Activated B cell treated with CpG ODN at 0.5 μM for 24 hours (primary cell): ENCODE measurements at regions of chr1 and their contacts with region 1.

Region 1: DNA sequence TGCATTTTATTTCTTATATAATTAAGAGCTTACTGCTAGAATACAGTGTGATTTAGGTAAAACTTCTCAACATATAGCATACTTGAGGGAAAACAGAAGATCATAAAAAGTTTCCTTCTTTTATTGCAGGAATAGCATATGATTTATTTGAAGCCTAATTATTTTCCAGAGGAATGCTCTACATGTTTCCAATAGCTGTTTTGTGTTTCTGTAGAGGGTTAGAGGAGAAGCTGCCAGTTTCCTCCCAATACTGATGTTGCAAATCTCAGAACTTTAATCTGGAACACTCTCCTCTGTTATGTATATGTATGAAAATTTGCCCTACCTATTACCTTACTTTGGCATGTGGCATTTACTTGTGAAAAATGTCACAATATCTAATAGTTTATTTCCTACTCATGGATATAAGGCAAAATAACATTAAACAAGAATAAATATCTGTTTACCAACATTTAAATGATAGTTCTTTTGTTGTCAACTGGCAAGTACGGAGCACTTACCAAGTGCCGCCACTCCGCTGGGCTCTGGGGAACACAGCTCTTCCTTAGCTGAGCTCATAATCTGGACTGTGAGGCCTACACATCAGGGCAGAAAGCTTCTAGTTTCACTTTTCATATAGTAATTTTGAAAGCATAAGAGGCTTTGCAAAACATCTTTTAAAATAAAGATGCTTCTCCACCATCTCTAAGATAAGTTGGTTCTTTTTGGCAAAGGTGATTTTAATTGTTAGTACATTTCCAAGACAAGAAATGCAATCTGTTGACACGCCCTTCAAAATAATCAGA is 239.8 kb upstream of the C1orf105 start:
- DNase-seq: no peak
- ATAC-seq: peak; percentile 76
- H3K4me3 Mint-ChIP-seq: peak overlapping the region; percentile 79
- H3K27ac Mint-ChIP-seq: peak overlapping the region; percentile 97
- H3K4me1 Mint-ChIP-seq: peaks cover 53% of the 10 kb centered on the region
- H3K27me3 Mint-ChIP-seq: no peaks in the 10 kb centered on the region
- CTCF ChIP-seq: no peak

Region 2: GRCh38 chr1:172089768-172090510 is 90.8 kb before region 1 on chr1:
- CTCF ChIA-PET with region 1: interaction called, 6 read pairs
- POLR2A ChIA-PET with region 1: no interaction called
- intact Hi-C with region 1: loop called (anchors 2 kb)
- DNase-seq: peak; percentile 41
- ATAC-seq: peak; percentile 90
- H3K4me3 Mint-ChIP-seq: peak overlapping the region; percentile 36
- H3K27ac Mint-ChIP-seq: peak overlapping the region; percentile 8
- H3K4me1 Mint-ChIP-seq: peaks cover 8% of the 10 kb centered on the region
- H3K27me3 Mint-ChIP-seq: no peaks in the 10 kb centered on the region
- CTCF ChIP-seq: no peak

Region 3: GRCh38 chr1:172229942-172230341 is 49.2 kb after region 1 on chr1:
- CTCF ChIA-PET with region 1: no interaction called
- POLR2A ChIA-PET with region 1: interaction called, 5 read pairs
- intact Hi-C with region 1: loop called (anchors 5 kb)
- DNase-seq: no peak
- ATAC-seq: no peak
- H3K4me3 Mint-ChIP-seq: no peak overlapping the region
- H3K27ac Mint-ChIP-seq: no peak overlapping the region
- H3K4me1 Mint-ChIP-seq: peaks cover 5% of the 10 kb centered on the region
- H3K27me3 Mint-ChIP-seq: no peaks in the 10 kb centered on the region
- CTCF ChIP-seq: no peak

Region 4: DNA sequence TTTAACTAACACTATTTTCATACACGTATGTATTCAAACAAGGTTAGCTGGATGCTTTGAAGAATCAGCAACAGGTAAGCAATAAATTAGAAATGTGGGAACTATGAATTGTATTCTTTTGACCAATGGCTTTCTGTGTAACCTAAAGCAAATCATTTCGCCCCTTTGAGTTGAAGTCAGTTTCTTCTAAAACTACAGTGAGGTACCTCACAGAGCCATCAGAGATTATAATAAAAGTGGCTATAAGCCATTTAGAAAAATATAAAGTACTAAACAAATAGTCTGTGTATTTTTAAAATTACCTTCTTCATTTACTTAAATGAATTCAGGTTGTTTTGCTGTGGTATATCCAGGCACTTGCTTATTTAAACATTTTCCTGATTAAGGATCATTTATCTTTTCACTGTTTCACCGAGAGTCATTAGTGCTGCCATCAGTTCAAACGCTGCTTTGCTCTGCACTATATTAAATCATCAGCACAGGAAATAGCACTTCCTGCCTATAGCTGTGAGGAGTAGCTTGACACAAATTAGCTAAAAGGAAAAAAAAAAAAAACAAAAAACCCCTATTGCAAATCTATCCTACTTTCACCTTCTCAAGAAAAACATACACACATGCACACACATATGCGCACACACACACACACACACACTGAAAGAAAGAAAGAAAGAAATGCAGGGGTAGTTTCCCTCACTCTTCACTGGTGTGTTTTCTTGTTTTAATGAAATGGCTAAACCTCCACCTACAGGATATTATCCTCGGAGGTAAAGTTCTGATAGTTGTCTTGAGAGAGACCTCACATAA is 199.9 kb after region 1 on chr1:
- CTCF ChIA-PET with region 1: interaction called, 5 read pairs
- POLR2A ChIA-PET with region 1: interaction called, 12 read pairs
- intact Hi-C with region 1: loop called (anchors 1 kb)
- DNase-seq: no peak
- ATAC-seq: peak; percentile 95
- H3K4me3 Mint-ChIP-seq: peak overlapping the region; percentile 67
- H3K27ac Mint-ChIP-seq: peak overlapping the region; percentile 94
- H3K4me1 Mint-ChIP-seq: peaks cover 58% of the 10 kb centered on the region
- H3K27me3 Mint-ChIP-seq: no peaks in the 10 kb centered on the region
- CTCF ChIP-seq: no peak

Region 5: DNA sequence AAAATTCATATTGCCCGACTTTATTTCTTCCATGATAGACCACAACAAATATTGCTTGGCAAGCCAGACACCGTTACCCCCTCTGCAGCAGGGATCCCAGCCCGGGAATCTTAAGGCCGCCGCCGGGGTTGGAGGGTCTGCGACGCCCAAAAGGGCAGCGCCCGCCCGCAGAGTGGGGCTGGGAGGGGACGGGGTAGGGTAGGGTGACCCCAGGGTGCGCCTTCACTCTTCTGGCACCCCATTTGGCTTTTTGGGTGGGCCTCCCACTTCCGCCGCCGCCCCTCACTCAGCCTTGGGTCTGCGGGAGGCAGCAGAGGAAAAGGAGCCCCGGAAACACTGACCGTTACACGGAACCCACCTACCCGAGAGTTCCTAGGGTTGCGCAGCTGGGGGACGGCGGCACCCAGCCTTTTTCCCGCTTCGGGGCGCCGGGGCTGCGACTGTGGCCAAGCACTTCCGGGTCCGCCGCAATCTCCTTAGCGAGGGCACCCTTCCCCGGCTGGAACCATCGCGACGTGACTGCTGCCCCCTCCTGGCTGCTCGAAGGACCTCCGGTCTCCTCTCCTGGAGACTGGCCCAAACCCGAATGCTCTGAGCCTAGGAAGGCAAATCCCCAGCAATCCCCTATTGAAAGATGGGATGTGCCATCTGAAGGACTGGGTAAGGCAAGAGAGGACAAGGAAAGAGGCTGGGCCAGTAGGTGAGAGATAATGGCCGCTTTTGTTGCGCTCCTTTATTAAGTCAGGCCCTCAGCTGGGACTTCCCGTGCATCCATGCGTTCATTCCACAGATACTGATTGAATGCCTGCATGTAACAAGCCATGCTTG is 263.1 kb after region 1 on chr1 and contains the start of gene PIGC:
- CTCF ChIA-PET with region 1: no interaction called
- POLR2A ChIA-PET with region 1: interaction called, 3 read pairs
- intact Hi-C with region 1: loop called (anchors 5 kb)
- DNase-seq: peak; percentile 80
- ATAC-seq: peak; percentile 99
- H3K4me3 Mint-ChIP-seq: peak within 1 kb of the TSS; percentile 90
- H3K27ac Mint-ChIP-seq: peak within 1 kb of the TSS; percentile 84
- H3K4me1 Mint-ChIP-seq: peaks cover 36% of the 10 kb centered on the region
- H3K27me3 Mint-ChIP-seq: no peaks in the 10 kb centered on the region
- CTCF ChIP-seq: no peak
- total RNA-seq, gene PIGC: 24.2 TPM in 2 replicates